Dendritic cell treated with granulocyte-macrophage colony-stimulating factor and Interleukin-4, amounts not matched to agents 40 ng/mL and 50 ng/mL, for 4 days (primary cell): ENCODE measurements at regions of chr1 and their contacts with region 1.

Region 1: DNA sequence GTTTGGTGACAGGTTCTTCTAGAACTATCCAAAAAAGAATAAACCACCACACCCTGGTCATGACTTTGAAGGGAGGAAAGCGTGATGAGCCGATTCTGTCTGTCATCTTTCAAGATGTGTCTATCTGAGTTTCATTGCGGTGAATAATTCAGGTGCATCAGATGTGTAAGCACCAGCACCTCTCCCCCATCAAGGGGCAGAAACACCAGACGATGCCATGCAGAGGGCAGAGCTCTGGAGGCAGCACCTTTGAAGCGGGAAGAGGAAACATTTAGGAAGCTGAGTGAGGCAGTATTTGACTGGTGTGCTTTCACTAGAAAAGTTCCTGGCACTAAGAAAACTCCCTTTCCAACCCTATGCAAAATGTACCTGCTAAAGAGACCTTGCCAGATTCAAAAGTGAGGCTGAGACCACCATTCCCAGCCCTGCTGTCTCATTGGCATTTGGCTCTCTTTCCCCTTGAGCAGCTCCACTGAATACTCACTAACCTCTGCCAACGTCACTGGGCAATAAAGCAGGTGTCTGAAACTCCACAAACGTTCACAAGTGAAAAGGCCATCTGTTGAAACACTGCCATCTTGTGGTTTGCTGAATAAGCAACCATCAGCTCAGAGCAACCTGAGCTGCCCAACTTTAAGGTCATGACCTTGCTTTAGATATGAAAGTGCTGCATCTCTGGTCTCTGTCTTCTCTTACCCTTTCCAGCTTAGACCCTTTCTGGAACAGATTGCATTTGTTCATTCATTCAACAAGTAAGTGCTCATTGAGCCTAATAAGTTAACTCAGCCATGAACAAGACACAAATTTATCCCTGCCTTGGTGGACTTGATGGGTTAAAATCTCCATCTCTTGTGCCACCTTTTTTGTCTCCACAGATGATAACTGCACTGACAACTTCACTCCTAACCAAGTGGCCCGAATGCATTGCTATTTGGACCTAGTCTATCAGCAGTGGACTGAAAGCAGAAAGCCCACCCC is 228.6 kb downstream of the PAPPA2 start:
- H3K4me3 Mint-ChIP-seq: no peak overlapping the region
- H3K27ac Mint-ChIP-seq: no peak overlapping the region
- H3K4me1 Mint-ChIP-seq: no peaks in the 10 kb centered on the region
- H3K27me3 Mint-ChIP-seq: no peaks in the 10 kb centered on the region

Region 2: DNA sequence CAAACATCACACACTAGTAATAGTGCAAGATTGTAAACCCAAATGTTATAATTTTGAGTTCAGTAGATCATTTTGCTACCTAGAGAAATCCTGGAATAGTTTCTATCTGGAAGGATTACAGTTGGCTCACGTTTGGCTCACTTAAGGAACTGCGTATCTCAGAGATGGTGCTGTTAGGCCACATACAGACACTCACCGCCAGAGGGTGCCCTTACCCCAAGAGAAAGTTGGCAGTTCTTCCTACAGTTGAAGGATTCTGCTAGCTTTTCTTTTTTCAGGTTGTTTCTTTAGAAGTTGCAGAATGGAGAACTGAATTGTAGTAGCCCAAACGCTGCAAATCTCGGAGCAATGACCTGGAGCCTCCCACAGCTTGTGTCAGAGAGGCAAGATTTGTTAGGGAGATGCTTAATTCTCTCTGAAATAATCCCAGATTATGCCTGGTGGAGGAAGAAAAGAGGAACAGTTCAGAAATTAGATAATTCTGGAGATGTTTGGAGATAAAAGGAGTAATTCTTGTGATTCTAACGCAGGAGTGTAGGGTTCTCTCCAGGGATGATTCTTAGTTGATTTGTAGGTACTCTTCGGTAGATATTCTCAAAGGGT is 316.5 kb before region 1 on chr1:
- intact Hi-C with region 1: loop called (anchors 10 kb)
- H3K4me3 Mint-ChIP-seq: no peak overlapping the region
- H3K27ac Mint-ChIP-seq: no peak overlapping the region
- H3K4me1 Mint-ChIP-seq: no peaks in the 10 kb centered on the region
- H3K27me3 Mint-ChIP-seq: no peaks in the 10 kb centered on the region

Region 3: GRCh38 chr1:176811511-176812288 is 120.2 kb after region 1 on chr1:
- intact Hi-C with region 1: no loop called
- H3K4me3 Mint-ChIP-seq: no peak overlapping the region
- H3K27ac Mint-ChIP-seq: no peak overlapping the region
- H3K4me1 Mint-ChIP-seq: no peaks in the 10 kb centered on the region
- H3K27me3 Mint-ChIP-seq: no peaks in the 10 kb centered on the region